Panc1 (cell line): ENCODE measurements at regions of chr19 and their contacts with region 1.

Region 1: DNA sequence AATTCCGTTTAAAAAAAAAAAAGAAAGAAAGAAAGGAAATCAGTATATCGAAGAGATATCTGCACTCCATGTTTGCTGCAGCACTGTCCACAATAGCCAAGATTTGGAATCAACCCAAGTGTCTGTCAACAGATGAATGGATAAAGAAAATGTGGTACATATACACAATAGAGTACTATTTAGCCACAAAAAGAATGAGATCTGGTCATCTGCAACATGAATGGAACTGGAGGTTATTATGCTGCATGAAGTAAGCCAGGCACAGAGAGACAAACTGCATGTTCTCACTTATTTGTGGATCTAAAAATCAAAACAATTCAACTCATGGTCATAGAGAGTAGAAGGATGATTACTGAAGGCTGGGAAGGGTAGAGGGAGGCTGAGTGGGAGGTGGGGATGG is 16.3 kb downstream of the ZNF565 start:
- DNase-seq: no peak
- ATAC-seq: no peak
- H3K4me3 ChIP-seq: no peak overlapping the region
- H3K27ac ChIP-seq: no peak overlapping the region
- H3K4me1 ChIP-seq: no peaks in the 10 kb centered on the region
- H3K27me3 ChIP-seq: no peaks in the 10 kb centered on the region
- CTCF ChIP-seq: no peak

Region 2: GRCh38 chr19:36489920-36490415 is 291.8 kb after region 1 on chr19:
- CTCF ChIA-PET with region 1: no interaction called
- POLR2A ChIA-PET with region 1: no interaction called
- in situ Hi-C with region 1: no loop called
- intact Hi-C with region 1: loop called (anchors 10 kb)
- DNase-seq: peak; percentile 83
- ATAC-seq: peak; percentile 91
- H3K4me3 ChIP-seq: peak overlapping the region; percentile 87 to 97
- H3K27ac ChIP-seq: peak overlapping the region; percentile 98
- H3K4me1 ChIP-seq: no peaks in the 10 kb centered on the region
- H3K27me3 ChIP-seq: no peaks in the 10 kb centered on the region
- CTCF ChIP-seq: no peak